Posterior cingulate gyrus (tissue), 11 donors: ENCODE measurements at regions of chr16 and their contacts with region 1.

Region 1: DNA sequence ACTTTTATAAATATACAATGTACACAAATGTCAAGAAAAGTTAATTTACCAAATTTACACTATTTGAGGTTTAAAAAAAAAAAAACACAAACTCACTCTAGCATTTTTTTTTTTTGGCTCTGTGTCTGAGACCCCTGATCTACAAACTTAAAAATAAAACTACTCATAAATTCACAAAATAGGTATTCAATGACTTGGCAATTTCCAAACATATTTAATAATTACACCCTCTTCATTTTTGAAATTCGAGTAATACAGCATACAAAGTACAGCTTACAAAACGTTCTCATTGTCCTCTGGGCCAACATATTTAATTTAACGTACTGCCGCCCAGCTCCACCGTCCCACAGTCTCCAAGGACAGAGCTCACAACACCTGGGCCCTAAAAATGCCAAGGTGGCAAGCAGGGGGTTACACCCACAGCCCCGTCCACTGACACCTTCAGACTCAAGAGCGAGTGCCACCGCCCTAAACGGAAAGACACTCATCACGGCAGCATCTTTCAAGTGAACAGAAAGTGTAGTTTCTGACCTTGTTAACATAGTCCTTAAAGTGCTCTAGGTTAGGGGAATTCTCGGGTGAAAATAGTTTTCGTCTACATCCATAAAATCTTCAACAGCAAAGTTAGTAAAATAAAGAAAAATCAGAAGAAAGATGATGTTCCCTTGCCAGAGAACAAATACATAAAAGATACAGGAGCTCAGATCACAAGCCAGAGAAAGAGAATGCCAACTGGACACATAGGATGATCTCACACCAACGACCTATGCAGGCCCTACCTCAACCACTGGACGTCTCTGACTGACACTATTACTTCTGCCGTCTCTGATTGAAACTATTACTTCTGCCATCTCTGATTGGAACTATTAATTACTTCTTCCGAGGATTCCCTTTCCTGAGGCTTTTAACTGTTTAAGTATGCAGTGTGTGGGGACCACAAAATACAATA is 4.2 kb downstream of the ADCY9 start:
- DNase-seq: peak in 1 of 10 donors; percentile 36

Region 2: GRCh38 chr16:4081521-4082021 is 30.5 kb before region 1 on chr16:
- intact Hi-C with region 1: no loop called
- DNase-seq: no peak

Region 3: GRCh38 chr16:4183237-4184036 is 71.4 kb after region 1 on chr16:
- intact Hi-C with region 1: loop called (anchors 5 kb)
- DNase-seq: peak; percentile 84 to 99 (median 90)